Gastrocnemius medialis (tissue), 4 donors: ENCODE measurements at regions of chr17 and their contacts with region 1.

Region 1: GRCh38 chr17:2244545-2245525 is 58.8 kb downstream of the SMG6 start:
- DNase-seq: peak; percentile 78 to 87
- ATAC-seq: peak; percentile 64 to 80
- H3K4me3 ChIP-seq: no peak overlapping the region
- H3K27ac ChIP-seq: peak overlapping the region; percentile 62 to 74 (median 65)
- H3K4me1 ChIP-seq: peaks cover 27% of the 10 kb centered on the region in 2 donors
- H3K27me3 ChIP-seq: no peaks in the 10 kb centered on the region
- CTCF ChIP-seq: peak; percentile 98 to 99 (median 99)
- POLR2A ChIP-seq: no peak

Region 2: GRCh38 chr17:2049333-2050299 is 195.2 kb before region 1 on chr17:
- in situ Hi-C with region 1: loop called in 2 of 4 experiments (anchors 5 kb)
- intact Hi-C with region 1: loop called (anchors 1 kb)
- DNase-seq: peak; percentile 49 to 73
- ATAC-seq: peak; percentile 59 to 65
- H3K4me3 ChIP-seq: peak overlapping the region; percentile 48 to 87 (median 64)
- H3K27ac ChIP-seq: peak overlapping the region in 3 of 4 donors; percentile 0 to 49 (median 48)
- H3K4me1 ChIP-seq: peaks cover 14 to 26% of the 10 kb centered on the region in 2 donors
- H3K27me3 ChIP-seq: peaks cover 11 to 14% (median 14%) of the 10 kb centered on the region in 3 donors
- CTCF ChIP-seq: no peak
- POLR2A ChIP-seq: peak in 1 of 2 donors; percentile 21

Region 3: DNA sequence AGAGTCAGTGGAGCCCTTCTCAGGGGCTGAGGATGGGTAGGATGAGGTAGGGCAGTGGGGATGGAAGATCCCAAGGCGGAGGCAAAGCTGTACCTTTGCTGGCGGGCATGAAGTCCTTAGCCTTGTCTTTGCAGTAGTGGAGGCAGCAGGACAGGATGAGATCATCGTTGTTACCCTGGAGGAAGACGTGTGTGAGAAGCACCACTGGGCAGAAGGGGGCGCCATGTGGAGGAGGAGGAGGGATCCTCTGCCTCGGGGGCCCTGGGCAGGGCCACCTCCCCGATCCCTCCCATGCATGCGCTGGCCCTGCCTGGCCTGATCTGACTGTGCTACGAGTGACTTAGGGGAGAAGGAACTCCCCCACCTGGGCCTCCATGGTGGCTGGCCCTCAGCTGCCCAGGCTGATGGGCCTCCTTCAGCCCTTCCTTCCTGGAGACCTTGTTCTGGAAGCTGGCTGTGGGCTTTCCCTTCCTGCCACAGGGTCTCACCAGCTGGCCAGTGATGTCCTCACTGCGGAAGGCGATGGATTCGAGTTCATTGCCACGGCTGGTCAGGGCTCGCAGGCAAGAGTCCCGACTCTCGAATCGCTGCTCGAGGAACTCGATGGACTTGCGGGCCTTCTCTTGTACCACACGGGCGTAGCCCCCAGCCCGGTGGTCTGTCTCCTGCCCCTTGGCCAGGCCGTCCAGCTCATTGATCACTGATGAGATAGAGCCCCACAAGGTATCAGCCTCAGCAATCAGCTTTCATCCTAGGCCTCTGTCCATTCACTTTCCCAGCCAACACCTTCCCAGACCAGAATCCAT is 179.7 kb before region 1 on chr17:
- in situ Hi-C with region 1: loop called in 3 of 4 experiments (anchors 5 to 10 kb)
- intact Hi-C with region 1: no loop called
- DNase-seq: no peak
- ATAC-seq: no peak
- H3K4me3 ChIP-seq: no peak overlapping the region
- H3K27ac ChIP-seq: peak overlapping the region; percentile 68 to 82 (median 74)
- H3K4me1 ChIP-seq: peaks cover 40 to 41% of the 10 kb centered on the region in 2 donors
- H3K27me3 ChIP-seq: no peaks in the 10 kb centered on the region
- CTCF ChIP-seq: peak in 1 of 5 experiments; percentile 17
- POLR2A ChIP-seq: no peak

Region 4: GRCh38 chr17:2113279-2113622 is 131.6 kb before region 1 on chr17:
- in situ Hi-C with region 1: no loop called
- intact Hi-C with region 1: no loop called
- DNase-seq: no peak
- ATAC-seq: no peak
- H3K4me3 ChIP-seq: no peak overlapping the region
- H3K27ac ChIP-seq: no peak overlapping the region
- H3K4me1 ChIP-seq: peaks cover 2% of the 10 kb centered on the region in 2 donors
- H3K27me3 ChIP-seq: no peaks in the 10 kb centered on the region
- CTCF ChIP-seq: no peak
- POLR2A ChIP-seq: no peak

Region 5: GRCh38 chr17:2207815-2208515 is 36.9 kb before region 1 on chr17:
- in situ Hi-C with region 1: no loop called
- intact Hi-C with region 1: loop called (anchors 2 kb)
- DNase-seq: peak in 1 of 2 donors; percentile 33
- ATAC-seq: peak; percentile 59 to 64
- H3K4me3 ChIP-seq: no peak overlapping the region
- H3K27ac ChIP-seq: peak overlapping the region; percentile 3 to 97 (median 62)
- H3K4me1 ChIP-seq: peaks cover 43 to 52% of the 10 kb centered on the region in 2 donors
- H3K27me3 ChIP-seq: no peaks in the 10 kb centered on the region
- CTCF ChIP-seq: no peak
- POLR2A ChIP-seq: no peak